GM12878 (cell line): ENCODE measurements at regions of chr6 and their contacts with region 1.

Region 1: DNA sequence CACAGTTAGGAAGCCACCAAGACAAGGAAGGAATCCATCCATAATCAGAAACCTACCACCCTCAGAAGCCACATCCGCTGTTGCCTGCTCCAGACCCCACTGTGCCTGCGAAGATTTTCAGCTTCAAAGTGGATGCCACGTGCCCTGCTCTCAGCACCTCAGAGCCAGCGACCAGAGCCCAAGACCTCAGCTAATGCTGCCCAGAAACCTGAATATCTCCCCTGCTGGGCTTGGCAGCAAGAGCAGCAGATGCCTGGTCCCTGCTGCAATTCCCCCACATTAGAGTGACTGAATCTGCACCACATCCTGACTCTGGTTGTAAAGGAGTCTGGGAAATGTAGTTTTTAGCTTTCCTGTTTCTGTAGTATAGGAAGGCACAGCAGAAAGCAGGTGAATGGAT is 10.7 kb upstream of the ULBP3 start:
- DNase-seq: no peak
- ATAC-seq: peak; percentile 30; the same call in 2 of the 3 replicates
- H3K4me3 ChIP-seq: no peak overlapping the region
- H3K27ac ChIP-seq: no peak overlapping the region
- H3K4me1 ChIP-seq: no peaks in the 10 kb centered on the region
- H3K27me3 ChIP-seq: no peaks in the 10 kb centered on the region; a peak in 1 of 4 replicates
- CTCF ChIP-seq: no peak
- EP300 ChIP-seq: no peak
- POLR2A ChIP-seq: no peak
- RAD21 ChIP-seq: no peak

Region 2: DNA sequence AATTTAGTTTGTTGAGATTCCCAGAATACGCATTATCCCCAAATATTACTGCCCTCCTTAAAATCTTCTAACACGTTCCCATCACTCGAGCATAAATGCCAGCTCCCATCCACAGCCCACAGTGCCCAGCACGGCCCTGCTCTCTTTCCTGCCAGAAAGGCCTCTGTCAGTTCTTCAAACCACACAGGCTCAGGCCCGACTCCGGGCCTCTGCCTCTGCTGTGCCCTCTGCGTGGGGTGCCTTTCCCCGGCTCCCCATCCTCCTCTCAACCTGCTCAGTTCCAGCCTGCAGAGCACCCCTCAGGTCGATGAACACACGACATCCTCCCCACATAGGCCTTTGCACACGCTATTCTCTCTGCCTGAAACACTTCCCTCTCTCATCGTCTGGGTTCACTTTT is 23.4 kb before region 1 on chr6:
- CTCF ChIA-PET with region 1: interaction called, 17 read pairs
- POLR2A ChIA-PET with region 1: no interaction called
- RAD21 ChIA-PET with region 1: no interaction called
- SMC1A ChIA-PET with region 1: interaction called, 6 read pairs
- in situ Hi-C with region 1: no loop called
- intact Hi-C with region 1: no loop called
- DNase-seq: no peak
- ATAC-seq: no peak
- H3K4me3 ChIP-seq: no peak overlapping the region
- H3K27ac ChIP-seq: no peak overlapping the region
- H3K4me1 ChIP-seq: no peaks in the 10 kb centered on the region
- H3K27me3 ChIP-seq: peaks cover 2 to 5% of the 10 kb centered on the region in 2 experiments; a peak in 2 of 4 replicates
- CTCF ChIP-seq: no peak
- EP300 ChIP-seq: no peak
- POLR2A ChIP-seq: no peak
- RAD21 ChIP-seq: no peak

Region 3: DNA sequence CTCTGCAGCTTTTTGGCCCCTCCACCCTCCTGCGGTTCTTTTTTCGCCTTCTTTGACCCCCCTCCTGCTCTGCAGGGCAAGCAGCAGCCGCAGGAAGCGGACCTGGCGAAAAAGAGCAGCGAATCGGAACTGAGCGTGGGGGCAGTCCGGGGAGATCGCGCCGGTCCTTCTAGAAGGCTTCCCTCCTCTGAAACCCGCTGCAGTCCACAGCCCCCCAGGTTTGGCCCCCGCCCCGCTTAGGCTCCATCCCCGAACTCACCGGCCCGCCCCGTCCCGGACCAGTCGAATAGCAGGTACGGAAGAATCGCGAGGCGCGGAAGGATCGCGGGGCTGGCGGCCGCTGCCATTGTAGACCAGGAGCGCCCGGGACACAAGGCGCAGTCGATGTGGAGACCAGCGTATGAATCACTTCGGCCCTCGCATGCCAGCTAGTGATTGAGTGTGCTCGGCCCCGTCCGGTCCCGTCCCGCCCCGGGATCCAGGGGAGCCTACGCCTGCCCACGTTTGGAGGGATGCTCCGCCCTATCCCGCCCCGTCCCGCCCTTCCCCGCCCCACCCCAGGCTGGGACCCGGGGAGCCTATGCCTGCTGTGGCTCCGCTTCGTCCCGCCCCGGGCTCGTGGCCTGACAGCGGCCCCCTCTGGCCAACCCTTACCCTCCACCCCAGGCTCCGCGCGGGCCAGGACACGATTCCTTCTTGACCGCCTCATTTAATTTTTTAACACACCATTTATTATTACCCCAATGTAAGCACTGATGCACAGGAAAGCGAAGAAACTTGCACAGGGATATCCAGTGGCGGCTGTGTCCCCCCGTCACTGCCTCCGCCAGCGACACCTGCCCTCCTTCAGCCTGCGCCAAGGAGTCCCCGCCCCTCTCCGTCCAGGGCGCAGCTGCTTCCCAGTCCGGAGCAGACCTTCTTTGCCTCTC is 10.6 kb before region 1 on chr6 and contains the start of gene ULBP3:
- CTCF ChIA-PET with region 1: interaction called, 25 read pairs
- POLR2A ChIA-PET with region 1: no interaction called
- RAD21 ChIA-PET with region 1: interaction called, 3 read pairs
- SMC1A ChIA-PET with region 1: no interaction called
- in situ Hi-C with region 1: no loop called
- intact Hi-C with region 1: no loop called
- DNase-seq: no peak
- ATAC-seq: peak; percentile 93
- H3K4me3 ChIP-seq: peak within 1 kb of the TSS; percentile 57
- H3K27ac ChIP-seq: no peak within 1 kb of the TSS
- H3K4me1 ChIP-seq: no peaks in the 10 kb centered on the region
- H3K27me3 ChIP-seq: peaks cover 0 to 2% of the 10 kb centered on the region in 2 experiments; a peak in 1 of 4 replicates
- CTCF ChIP-seq: peak; percentile 13 to 52 (median 44); a peak in 3 of 6 replicates
- EP300 ChIP-seq: no peak
- POLR2A ChIP-seq: peak; percentile 38; the same call in 1 of the 2 replicates
- RAD21 ChIP-seq: no peak
- polyA plus RNA-seq, gene ULBP3: not detected

Region 4: DNA sequence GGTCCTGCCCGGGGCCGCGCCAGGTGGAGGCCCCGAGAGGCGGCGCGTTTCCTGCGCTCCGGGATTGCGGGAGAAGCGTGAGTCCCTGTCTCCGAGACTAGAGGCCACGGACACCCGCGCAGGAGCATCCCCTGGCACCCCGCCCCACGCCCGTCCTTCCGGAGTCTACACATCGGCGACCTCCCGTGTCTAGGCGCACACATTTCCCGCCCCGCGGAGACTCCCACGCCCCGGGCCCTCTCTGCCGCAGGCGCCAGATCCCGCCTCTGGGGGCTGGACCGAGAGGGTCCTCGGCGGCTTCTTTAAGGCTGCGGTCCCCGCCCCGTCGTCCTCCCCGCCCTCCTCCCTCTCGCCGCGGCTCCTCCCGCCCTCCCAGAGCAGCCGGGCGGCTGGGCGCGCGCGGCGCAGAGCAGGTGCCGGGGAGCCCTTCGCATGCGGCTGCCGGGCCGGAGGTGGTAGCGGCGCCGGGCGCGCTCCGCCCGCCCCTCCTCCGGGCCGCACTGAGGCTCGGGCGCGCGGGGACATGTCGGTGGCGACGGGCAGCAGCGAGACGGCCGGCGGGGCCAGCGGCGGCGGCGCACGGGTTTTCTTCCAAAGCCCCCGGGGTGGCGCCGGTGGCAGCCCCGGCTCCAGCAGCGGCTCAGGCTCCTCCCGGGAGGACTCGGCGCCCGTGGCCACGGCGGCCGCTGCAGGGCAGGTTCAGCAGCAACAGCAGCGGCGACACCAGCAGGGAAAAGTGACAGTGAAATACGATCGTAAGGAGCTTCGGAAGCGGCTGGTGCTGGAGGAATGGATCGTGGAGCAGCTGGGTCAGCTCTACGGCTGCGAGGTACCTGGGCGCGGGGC is 63.3 kb after region 1 on chr6 and contains the start of gene PPP1R14C:
- CTCF ChIA-PET with region 1: interaction called, 3 read pairs
- POLR2A ChIA-PET with region 1: no interaction called
- RAD21 ChIA-PET with region 1: no interaction called
- SMC1A ChIA-PET with region 1: no interaction called
- in situ Hi-C with region 1: no loop called
- intact Hi-C with region 1: loop called (anchors 5 kb)
- DNase-seq: no peak
- ATAC-seq: peak; percentile 50
- H3K4me3 ChIP-seq: no peak within 1 kb of the TSS
- H3K27ac ChIP-seq: no peak within 1 kb of the TSS
- H3K4me1 ChIP-seq: peaks cover 3% of the 10 kb centered on the region; the same call in 1 of the 2 replicates
- H3K27me3 ChIP-seq: peaks cover 3 to 20% of the 10 kb centered on the region in 2 experiments
- CTCF ChIP-seq: no peak
- EP300 ChIP-seq: no peak
- POLR2A ChIP-seq: no peak
- RAD21 ChIP-seq: no peak
- polyA plus RNA-seq, gene PPP1R14C: 0.09 to 0.16 TPM

Region 5: DNA sequence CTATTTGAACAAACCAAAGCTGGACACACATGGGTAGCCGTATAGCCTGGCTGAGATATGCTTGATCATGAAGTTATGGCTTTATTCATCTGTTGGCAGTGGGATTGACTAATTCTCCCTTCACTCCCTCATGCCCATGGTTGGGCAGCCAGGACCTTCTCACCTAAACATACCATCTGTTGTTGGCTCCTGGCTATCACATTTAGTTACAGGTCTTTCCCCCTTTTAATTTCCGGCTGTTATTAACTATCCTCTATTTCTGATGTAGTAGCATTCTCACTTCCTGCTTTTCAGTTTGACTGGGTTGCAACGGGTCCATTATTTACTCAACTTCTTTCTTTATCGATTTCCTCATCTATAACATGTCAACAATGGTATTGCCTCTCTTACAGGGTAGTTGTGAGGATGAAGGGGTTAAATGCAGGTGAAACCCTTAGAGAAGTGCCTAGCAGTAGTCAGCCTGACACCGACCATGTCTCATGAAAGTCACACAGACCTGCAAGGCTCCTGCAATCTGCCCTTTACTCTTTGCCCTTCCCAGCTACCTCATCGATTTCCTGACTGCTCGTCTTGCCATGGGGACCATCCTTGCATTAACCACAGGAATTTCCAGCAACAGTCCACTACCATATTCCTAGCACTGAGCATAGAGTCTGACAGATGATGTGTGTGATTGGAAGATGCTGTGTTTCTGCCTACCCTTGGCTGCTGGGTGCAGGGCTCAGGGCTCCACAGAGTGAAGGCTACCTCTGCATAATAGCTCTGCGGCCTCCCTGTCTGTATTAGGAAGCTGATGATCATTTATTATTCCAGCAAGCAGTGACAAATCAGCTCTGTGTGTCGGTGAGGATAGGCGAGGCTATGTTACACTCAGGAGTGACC is 105.5 kb after region 1 on chr6:
- CTCF ChIA-PET with region 1: interaction called, 14 read pairs
- POLR2A ChIA-PET with region 1: no interaction called
- RAD21 ChIA-PET with region 1: interaction called, 4 read pairs
- SMC1A ChIA-PET with region 1: interaction called, 8 read pairs
- in situ Hi-C with region 1: no loop called
- intact Hi-C with region 1: loop called (anchors 5 kb)
- DNase-seq: peak; percentile 13
- ATAC-seq: peak; percentile 75
- H3K4me3 ChIP-seq: no peak overlapping the region
- H3K27ac ChIP-seq: no peak overlapping the region
- H3K4me1 ChIP-seq: 0 out of 2 replicates have a peak, but pooled peaks cover 3% of the 10 kb centered on the region
- H3K27me3 ChIP-seq: no peaks in the 10 kb centered on the region
- CTCF ChIP-seq: no peak
- EP300 ChIP-seq: peak; percentile 14 to 24; a peak in 1 of 4 replicates
- POLR2A ChIP-seq: no peak
- RAD21 ChIP-seq: no peak

Region 6: DNA sequence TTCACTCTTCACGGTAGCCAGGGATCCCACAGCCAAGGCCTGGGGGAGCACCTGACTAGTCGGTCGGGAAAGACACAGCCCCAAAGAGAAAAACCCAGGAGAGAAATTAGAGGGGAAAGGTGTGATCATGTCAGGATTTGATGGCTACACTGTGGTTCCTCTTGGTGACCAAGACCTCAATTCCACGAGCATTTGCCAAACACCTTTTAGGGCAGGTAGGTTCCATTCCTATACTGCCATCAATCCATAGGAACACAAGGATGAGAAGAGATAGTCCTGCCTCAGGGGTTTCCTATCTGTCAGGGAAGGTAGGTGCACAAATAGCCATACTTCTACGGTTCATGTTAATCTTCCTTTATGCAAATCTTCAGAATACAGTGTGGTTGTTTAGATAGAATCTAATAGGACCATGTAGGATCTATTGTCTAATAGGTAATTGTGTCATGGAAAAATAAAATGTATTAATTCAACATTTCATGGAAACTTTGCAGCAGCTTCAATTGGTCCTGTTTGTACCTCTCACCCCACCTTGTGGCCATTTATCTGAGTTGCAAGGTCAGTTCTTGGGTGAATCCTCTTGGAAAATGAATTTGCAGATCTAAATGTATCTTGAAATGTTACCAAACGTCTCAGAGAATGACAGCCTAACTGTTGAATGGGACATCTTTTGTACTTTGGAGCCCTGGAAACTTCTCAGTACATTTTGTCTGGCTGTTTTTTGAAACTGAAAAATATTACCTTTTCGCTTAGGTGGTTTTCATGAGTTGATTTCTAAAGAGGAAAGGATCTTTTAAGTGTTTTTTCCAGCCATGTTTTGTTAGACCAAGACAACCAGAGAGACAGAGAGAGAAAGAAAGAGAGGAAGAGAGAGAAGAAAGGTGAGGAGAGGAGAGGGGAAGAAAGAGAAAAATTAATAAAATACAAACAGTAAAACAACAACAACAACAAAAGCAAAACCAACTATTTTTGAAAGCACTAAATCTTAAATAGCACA is 255.5 kb after region 1 on chr6:
- CTCF ChIA-PET with region 1: interaction called, 30 read pairs
- POLR2A ChIA-PET with region 1: no interaction called
- RAD21 ChIA-PET with region 1: interaction called, 8 read pairs
- SMC1A ChIA-PET with region 1: interaction called, 8 read pairs
- in situ Hi-C with region 1: loop called (anchors 10 kb)
- intact Hi-C with region 1: loop called (anchors 1 kb)
- DNase-seq: no peak
- ATAC-seq: peak; percentile 43; the same call in 2 of the 3 replicates
- H3K4me3 ChIP-seq: no peak overlapping the region
- H3K27ac ChIP-seq: no peak overlapping the region
- H3K4me1 ChIP-seq: no peaks in the 10 kb centered on the region
- H3K27me3 ChIP-seq: no peaks in the 10 kb centered on the region
- CTCF ChIP-seq: peak; percentile 59 to 70 (median 68); a peak in 5 of 6 replicates
- EP300 ChIP-seq: no peak
- POLR2A ChIP-seq: no peak
- RAD21 ChIP-seq: peak; percentile 87

Region 7: DNA sequence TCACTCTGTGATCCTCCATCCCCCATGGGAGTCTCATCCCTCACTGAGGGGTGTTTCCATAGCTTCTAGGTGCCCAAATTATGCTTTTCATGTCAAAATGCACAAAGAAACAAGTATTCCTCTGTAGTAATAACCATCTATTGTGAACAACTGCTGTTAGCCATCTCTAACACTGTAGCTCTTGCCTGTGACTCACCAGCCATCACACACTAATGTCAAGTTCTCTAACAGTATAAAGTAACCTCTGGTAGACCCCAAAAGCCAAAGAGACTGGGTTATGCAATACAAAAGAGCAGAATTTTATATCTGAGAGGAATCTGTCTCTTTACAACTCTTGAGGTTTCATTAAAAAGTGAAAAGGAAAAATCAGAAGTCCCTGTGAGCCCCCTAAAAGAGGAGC is 263.8 kb after region 1 on chr6:
- CTCF ChIA-PET with region 1: interaction called, 10 read pairs
- POLR2A ChIA-PET with region 1: no interaction called
- RAD21 ChIA-PET with region 1: interaction called, 4 read pairs
- SMC1A ChIA-PET with region 1: interaction called, 11 read pairs
- in situ Hi-C with region 1: loop called (anchors 10 kb)
- intact Hi-C with region 1: no loop called
- DNase-seq: no peak
- ATAC-seq: no peak
- H3K4me3 ChIP-seq: no peak overlapping the region
- H3K27ac ChIP-seq: no peak overlapping the region
- H3K4me1 ChIP-seq: no peaks in the 10 kb centered on the region
- H3K27me3 ChIP-seq: no peaks in the 10 kb centered on the region; a peak in 2 of 4 replicates
- CTCF ChIP-seq: no peak
- EP300 ChIP-seq: no peak
- POLR2A ChIP-seq: no peak
- RAD21 ChIP-seq: no peak